ENCODE measurements at regions of chr2 and their contacts with region 1.

Region 1: DNA sequence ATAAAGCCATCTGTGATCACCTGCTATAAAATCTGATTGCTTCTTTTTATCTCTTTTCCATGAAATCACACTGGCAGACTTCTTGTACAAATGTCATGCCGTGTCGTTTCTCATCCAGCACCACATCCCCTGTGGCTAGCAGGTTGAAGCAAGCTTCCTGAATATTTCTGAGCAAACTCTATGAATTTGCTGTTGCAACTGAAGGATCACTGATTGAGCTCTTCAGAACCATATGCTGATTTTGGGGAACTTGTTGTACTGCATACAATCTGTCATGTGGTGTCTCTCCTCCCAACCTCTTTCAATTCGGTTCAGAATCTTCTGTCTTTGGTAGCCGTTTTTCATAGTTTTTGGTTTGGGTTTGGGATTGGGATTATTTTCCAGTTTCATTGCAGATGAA is 57.7 kb upstream of the RBMS1 start:
- H3K4me3 Mint-ChIP-seq: peak overlapping the region; percentile 66
- H3K27ac Mint-ChIP-seq: peak overlapping the region; percentile 77
- H3K4me1 Mint-ChIP-seq: peaks cover 25% of the 10 kb centered on the region
- H3K27me3 Mint-ChIP-seq: no peaks in the 10 kb centered on the region

Region 2: GRCh38 chr2:160918906-160919503 is 367.7 kb after region 1 on chr2:
- intact Hi-C with region 1: loop called (anchors 5 kb)
- H3K4me3 Mint-ChIP-seq: no peak overlapping the region
- H3K27ac Mint-ChIP-seq: no peak overlapping the region
- H3K4me1 Mint-ChIP-seq: peaks cover 12% of the 10 kb centered on the region
- H3K27me3 Mint-ChIP-seq: no peaks in the 10 kb centered on the region